ENCODE measurements at regions of chr5 and their contacts with region 1.

Region 1: GRCh38 chr5:80641353-80641752 is 13.1 kb upstream of the MSH3 start:
- DNase-seq: no peak
- ATAC-seq: no peak
- H3K4me3 Mint-ChIP-seq: no peak overlapping the region
- H3K27ac Mint-ChIP-seq: no peak overlapping the region
- H3K4me1 Mint-ChIP-seq: peaks cover 6% of the 10 kb centered on the region
- H3K27me3 Mint-ChIP-seq: no peaks in the 10 kb centered on the region
- CTCF ChIP-seq: no peak

Region 2: GRCh38 chr5:80654391-80655230 is 13.3 kb after region 1 on chr5 and contains the starts of genes DHFR and MSH3:
- CTCF ChIA-PET with region 1: no interaction called
- POLR2A ChIA-PET with region 1: interaction called, 10 read pairs
- intact Hi-C with region 1: no loop called
- DNase-seq: peak; percentile 95
- ATAC-seq: peak; percentile 77
- H3K4me3 Mint-ChIP-seq: peak within 1 kb of the TSS; percentile 96
- H3K27ac Mint-ChIP-seq: peak within 1 kb of the TSS; percentile 100
- H3K4me1 Mint-ChIP-seq: peaks cover 24% of the 10 kb centered on the region
- H3K27me3 Mint-ChIP-seq: no peaks in the 10 kb centered on the region
- CTCF ChIP-seq: no peak
- total RNA-seq, gene DHFR: 107 to 109 TPM
- total RNA-seq, gene MSH3: 23.0 to 23.4 TPM

Region 3: DNA sequence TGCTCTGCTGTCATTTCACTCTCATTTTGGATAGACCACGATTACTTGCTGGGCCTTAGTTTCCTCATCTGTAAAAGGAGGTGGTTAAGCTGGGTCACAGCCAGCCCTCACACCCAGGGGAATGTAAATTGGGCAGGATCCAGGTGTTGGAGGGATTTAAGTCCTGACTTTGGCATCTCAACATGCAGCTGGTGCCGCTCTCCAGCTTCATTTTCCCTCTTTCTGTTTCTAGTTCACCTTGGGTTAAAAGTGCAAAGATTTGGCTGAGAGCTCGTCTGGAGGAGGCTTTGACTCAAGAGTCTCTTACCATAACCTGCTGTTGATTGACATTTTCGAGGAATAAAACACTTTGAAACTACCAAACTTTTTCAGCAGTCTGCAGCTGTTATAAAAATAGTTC is 157.7 kb after region 1 on chr5:
- CTCF ChIA-PET with region 1: no interaction called
- POLR2A ChIA-PET with region 1: no interaction called
- intact Hi-C with region 1: no loop called
- DNase-seq: no peak
- ATAC-seq: no peak
- H3K4me3 Mint-ChIP-seq: no peak overlapping the region
- H3K27ac Mint-ChIP-seq: no peak overlapping the region
- H3K4me1 Mint-ChIP-seq: no peaks in the 10 kb centered on the region
- H3K27me3 Mint-ChIP-seq: no peaks in the 10 kb centered on the region
- CTCF ChIP-seq: no peak